Activated CD8-positive, alpha-beta T cell treated with anti-CD3 and anti-CD28 coated beads, Interleukin-2, amount 10 ng/mL, durations not matched to agents 7 days and 5 days (primary cell): ENCODE measurements at regions of chr12 and their contacts with region 1.

Region 1: GRCh38 chr12:4276524-4277204 is 3.1 kb downstream of the CCND2 start:
- DNase-seq: peak; percentile 93
- ATAC-seq: peak; percentile 13
- H3K4me3 Mint-ChIP-seq: peak overlapping the region; percentile 99
- H3K27ac Mint-ChIP-seq: peak overlapping the region; percentile 84
- H3K4me1 Mint-ChIP-seq: peaks cover 59% of the 10 kb centered on the region
- H3K27me3 Mint-ChIP-seq: no peaks in the 10 kb centered on the region

Region 2: DNA sequence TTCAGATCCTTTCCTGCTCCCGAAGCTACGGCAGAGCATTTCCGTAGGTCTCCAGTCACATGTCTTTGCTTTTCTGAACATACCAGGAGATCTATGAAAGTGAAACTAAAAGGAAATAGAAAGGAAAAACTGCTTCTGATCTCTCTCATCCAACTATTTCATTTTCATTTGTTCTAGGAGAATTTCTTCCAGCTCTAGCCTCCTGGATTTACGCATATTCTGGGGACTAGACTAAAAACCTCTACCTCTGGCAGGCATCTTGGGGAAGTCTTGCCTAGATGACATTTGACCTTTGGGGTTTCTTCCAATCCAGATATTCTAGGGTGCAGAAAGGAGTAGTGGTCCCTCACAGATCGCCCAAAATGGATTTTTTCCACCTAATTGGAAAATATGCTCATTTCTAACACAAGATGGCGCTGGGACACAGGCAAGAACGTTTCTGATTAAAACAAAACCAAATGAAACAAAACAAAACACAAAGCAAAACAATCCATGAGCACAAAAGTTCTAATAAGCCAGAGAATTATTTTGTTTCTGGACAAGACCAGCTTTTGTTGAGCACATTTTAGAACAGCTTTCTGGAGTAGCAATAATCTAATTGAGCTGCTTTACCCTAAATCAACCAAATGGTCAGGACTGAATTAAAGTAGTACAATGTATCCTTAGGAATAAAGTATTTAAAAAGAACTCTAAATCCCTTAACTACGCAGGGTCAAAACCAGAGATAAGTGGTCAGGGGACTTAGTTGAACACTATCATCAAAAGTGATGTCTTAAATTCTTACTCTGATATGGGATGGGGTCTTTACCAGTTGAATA is 391.2 kb before region 1 on chr12:
- CTCF ChIA-PET with region 1: interaction called, 242 read pairs
- POLR2A ChIA-PET with region 1: interaction called, 27 read pairs
- DNase-seq: peak; percentile 65
- ATAC-seq: peak; percentile 43
- H3K4me3 Mint-ChIP-seq: no peak overlapping the region
- H3K27ac Mint-ChIP-seq: peak overlapping the region; percentile 8
- H3K4me1 Mint-ChIP-seq: peaks cover 12% of the 10 kb centered on the region
- H3K27me3 Mint-ChIP-seq: peaks cover 7% of the 10 kb centered on the region

Region 3: GRCh38 chr12:3998968-3999826 is 277.5 kb before region 1 on chr12:
- CTCF ChIA-PET with region 1: interaction called, 163 read pairs
- POLR2A ChIA-PET with region 1: interaction called, 12 read pairs
- DNase-seq: no peak
- ATAC-seq: no peak
- H3K4me3 Mint-ChIP-seq: no peak overlapping the region
- H3K27ac Mint-ChIP-seq: no peak overlapping the region
- H3K4me1 Mint-ChIP-seq: peaks cover 39% of the 10 kb centered on the region
- H3K27me3 Mint-ChIP-seq: no peaks in the 10 kb centered on the region

Region 4: GRCh38 chr12:4107436-4107878 is 169.2 kb before region 1 on chr12:
- CTCF ChIA-PET with region 1: interaction called, 132 read pairs
- POLR2A ChIA-PET with region 1: interaction called, 68 read pairs
- DNase-seq: peak; percentile 89
- ATAC-seq: peak; percentile 93
- H3K4me3 Mint-ChIP-seq: peak overlapping the region; percentile 60
- H3K27ac Mint-ChIP-seq: peak overlapping the region; percentile 92
- H3K4me1 Mint-ChIP-seq: peaks cover 64% of the 10 kb centered on the region
- H3K27me3 Mint-ChIP-seq: peaks cover 2% of the 10 kb centered on the region

Region 5: GRCh38 chr12:4148418-4149056 is 128.1 kb before region 1 on chr12:
- CTCF ChIA-PET with region 1: interaction called, 95 read pairs
- POLR2A ChIA-PET with region 1: interaction called, 260 read pairs
- DNase-seq: peak; percentile 39
- ATAC-seq: no peak
- H3K4me3 Mint-ChIP-seq: no peak overlapping the region
- H3K27ac Mint-ChIP-seq: peak overlapping the region; percentile 74
- H3K4me1 Mint-ChIP-seq: peaks cover 96% of the 10 kb centered on the region
- H3K27me3 Mint-ChIP-seq: no peaks in the 10 kb centered on the region

Region 6: DNA sequence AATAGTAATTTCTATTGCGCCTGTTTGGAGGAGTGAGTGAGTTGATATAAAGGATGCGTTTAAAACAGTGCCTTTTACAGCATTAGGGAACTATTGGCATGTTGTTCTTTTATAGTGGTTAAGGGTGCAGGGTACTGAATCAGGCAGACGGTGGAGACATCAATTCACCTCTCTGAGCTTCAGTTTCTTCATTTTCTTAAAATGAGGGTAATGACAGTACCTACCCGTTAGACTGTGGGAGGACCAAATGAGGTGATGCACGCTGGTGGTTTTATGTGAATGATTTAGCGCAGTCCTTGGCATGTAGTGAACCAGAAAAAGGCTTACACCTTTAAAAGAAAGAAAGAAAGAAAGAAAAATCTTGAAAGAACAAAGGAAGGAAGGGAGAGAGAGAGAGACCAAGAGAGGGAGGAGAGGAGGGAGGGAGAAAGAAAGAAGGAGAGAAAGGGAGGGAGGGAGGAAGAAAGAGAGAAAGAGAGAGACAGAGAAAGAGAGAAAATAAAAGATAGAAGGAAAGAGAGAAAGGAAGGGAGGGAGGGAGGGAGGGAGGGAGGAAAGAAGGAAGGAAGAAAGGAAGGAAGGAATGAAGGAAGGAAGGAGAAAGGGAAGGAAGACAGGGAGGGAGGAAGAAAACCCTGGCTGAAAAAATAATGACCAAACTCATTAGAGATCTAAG is 25.3 kb before region 1 on chr12:
- CTCF ChIA-PET with region 1: interaction called, 16 read pairs
- POLR2A ChIA-PET with region 1: interaction called, 6 read pairs
- DNase-seq: no peak
- ATAC-seq: peak; percentile 36
- H3K4me3 Mint-ChIP-seq: no peak overlapping the region
- H3K27ac Mint-ChIP-seq: peak overlapping the region; percentile 58
- H3K4me1 Mint-ChIP-seq: peaks cover 15% of the 10 kb centered on the region
- H3K27me3 Mint-ChIP-seq: peaks cover 2% of the 10 kb centered on the region

Region 7: GRCh38 chr12:4421590-4422031 is 144.9 kb after region 1 on chr12:
- CTCF ChIA-PET with region 1: no interaction called
- POLR2A ChIA-PET with region 1: no interaction called
- DNase-seq: peak; percentile 41
- ATAC-seq: no peak
- H3K4me3 Mint-ChIP-seq: no peak overlapping the region
- H3K27ac Mint-ChIP-seq: no peak overlapping the region
- H3K4me1 Mint-ChIP-seq: peaks cover 4% of the 10 kb centered on the region
- H3K27me3 Mint-ChIP-seq: peaks cover 12% of the 10 kb centered on the region